ENCODE measurements at regions of chr12 and their contacts with region 1.

Region 1: DNA sequence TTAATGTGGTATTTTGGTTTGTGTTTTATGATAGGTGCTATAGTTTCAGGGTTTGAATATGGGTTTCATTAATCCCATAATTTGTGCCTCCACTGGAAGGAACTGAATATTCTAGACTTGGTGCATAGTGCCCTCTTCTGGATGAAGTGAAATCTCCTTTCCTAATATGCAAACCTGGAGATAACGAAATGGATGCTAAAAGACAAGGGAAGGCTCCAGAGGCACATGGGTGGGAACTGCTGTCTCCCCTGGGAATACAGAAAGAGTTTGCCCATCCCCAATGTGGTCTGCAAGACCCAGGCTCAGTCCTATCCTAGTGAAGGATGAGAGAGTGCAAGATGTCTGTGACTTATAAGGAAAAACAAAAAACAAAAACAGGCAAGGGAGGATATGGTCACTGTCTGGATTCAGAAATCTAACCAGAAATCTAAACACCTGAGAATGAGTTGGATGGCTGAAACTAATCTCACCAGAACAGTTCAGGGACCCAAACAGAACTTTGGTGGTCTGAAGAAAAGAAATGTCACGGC is 142.3 kb upstream of the TMPO start:
- DNase-seq: peak; percentile 61
- H3K4me3 ChIP-seq: no peak overlapping the region
- H3K27ac ChIP-seq: no peak overlapping the region
- H3K4me1 ChIP-seq: peaks cover 27% of the 10 kb centered on the region
- H3K27me3 ChIP-seq: peaks cover 7 to 9% of the 10 kb centered on the region in 2 experiments
- CTCF ChIP-seq: peak; percentile 46 to 47
- POLR2A ChIP-seq: no peak

Region 2: DNA sequence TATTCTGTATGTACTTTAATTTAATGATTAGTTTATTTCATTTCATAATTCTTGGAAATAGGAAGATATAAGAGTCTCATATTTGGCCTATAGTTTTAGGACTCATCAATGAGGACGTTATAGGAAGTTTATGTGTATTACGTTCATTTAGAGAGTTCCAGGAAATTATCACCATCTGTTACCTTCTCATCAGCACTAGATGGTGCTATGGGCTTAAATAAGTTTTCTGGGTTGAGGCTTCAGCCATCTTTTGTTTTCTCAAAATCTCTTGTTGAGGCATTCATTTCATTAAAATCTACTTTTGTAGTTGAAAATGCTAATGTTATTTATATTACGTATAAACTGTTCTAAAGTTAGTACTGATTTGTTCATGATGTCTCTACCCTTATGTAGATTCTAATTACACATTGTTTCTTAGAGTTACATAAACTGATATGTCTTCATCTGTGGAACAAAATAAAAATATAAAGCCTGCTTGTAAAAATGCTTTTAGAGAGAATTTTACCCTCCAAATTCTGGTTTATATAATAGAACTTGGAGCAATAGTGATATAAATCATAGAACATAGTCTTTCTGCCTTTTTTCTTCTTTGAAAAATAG is 1794.5 kb before region 1 on chr12:
- CTCF ChIA-PET with region 1: no interaction called
- POLR2A ChIA-PET with region 1: no interaction called
- dilution Hi-C with region 1: no loop called
- intact Hi-C with region 1: loop called (anchors 10 kb)
- DNase-seq: peak; percentile 56
- H3K4me3 ChIP-seq: no peak overlapping the region
- H3K27ac ChIP-seq: no peak overlapping the region
- H3K4me1 ChIP-seq: no peaks in the 10 kb centered on the region
- H3K27me3 ChIP-seq: no peaks in the 10 kb centered on the region
- CTCF ChIP-seq: peak; percentile 30 to 39
- POLR2A ChIP-seq: no peak

Region 3: GRCh38 chr12:97308576-97309198 is 1064.4 kb before region 1 on chr12:
- CTCF ChIA-PET with region 1: no interaction called
- POLR2A ChIA-PET with region 1: no interaction called
- dilution Hi-C with region 1: no loop called
- intact Hi-C with region 1: loop called (anchors 10 kb)
- DNase-seq: peak; percentile 77
- H3K4me3 ChIP-seq: no peak overlapping the region
- H3K27ac ChIP-seq: no peak overlapping the region
- H3K4me1 ChIP-seq: no peaks in the 10 kb centered on the region
- H3K27me3 ChIP-seq: peaks cover 0 to 1% of the 10 kb centered on the region in 2 experiments
- CTCF ChIP-seq: peak; percentile 37 to 50
- POLR2A ChIP-seq: no peak

Region 4: DNA sequence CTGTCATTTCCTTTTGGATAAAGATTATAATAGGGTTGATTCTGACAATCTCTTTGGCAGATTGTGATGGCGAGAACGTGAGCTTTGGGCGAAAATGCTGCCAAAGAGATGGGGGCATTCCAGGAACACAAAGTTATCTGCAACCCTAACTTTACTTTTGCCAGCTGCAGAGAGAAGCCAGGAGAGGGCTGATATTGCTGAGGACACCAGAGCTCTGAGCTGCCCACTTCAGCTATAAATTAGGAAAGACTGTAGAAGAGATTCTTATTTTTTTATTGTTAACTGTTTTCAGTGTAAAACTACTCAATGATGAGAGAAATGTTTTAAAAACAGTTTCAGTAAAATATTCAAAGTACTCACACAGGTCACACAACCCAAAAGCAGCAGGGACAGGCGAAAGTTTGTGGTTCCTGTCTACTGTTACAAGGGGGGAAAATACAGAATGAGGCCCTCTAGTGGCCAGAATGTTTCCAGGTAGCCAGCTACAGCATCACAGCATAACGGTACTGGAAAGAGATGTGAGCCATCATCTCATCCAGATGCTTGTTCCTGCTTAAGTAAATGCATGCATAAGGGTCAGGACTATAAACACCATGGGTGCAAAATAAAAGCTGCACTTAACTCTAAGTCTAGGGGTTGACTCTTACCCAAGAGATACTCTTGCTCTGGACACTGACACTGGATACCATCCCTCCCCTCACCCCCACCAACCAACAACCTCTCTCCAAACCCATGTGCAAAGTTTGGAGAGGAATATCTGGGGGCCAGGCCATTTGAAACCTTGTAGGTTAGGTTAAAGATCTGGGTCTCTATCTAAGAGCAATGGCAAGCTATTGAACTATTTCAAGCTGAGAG is 412.1 kb before region 1 on chr12:
- CTCF ChIA-PET with region 1: interaction called, 4 read pairs
- POLR2A ChIA-PET with region 1: no interaction called
- dilution Hi-C with region 1: no loop called
- intact Hi-C with region 1: loop called (anchors 2 kb)
- DNase-seq: peak; percentile 20
- H3K4me3 ChIP-seq: no peak overlapping the region
- H3K27ac ChIP-seq: no peak overlapping the region
- H3K4me1 ChIP-seq: no peaks in the 10 kb centered on the region
- H3K27me3 ChIP-seq: no peaks in the 10 kb centered on the region
- CTCF ChIP-seq: peak; percentile 63 to 73
- POLR2A ChIP-seq: no peak

Region 5: GRCh38 chr12:98154850-98155249 is 218.2 kb before region 1 on chr12:
- CTCF ChIA-PET with region 1: interaction called, 3 read pairs
- POLR2A ChIA-PET with region 1: no interaction called
- dilution Hi-C with region 1: no loop called
- intact Hi-C with region 1: loop called (anchors 1 kb)
- DNase-seq: peak; percentile 57
- H3K4me3 ChIP-seq: no peak overlapping the region
- H3K27ac ChIP-seq: no peak overlapping the region
- H3K4me1 ChIP-seq: no peaks in the 10 kb centered on the region
- H3K27me3 ChIP-seq: peaks cover 0 to 7% of the 10 kb centered on the region in 2 experiments
- CTCF ChIP-seq: peak; percentile 34 to 65
- POLR2A ChIP-seq: no peak

Region 6: GRCh38 chr12:98211909-98212695 is 161.0 kb before region 1 on chr12:
- CTCF ChIA-PET with region 1: no interaction called
- POLR2A ChIA-PET with region 1: no interaction called
- dilution Hi-C with region 1: no loop called
- intact Hi-C with region 1: no loop called
- DNase-seq: peak; percentile 35
- H3K4me3 ChIP-seq: no peak overlapping the region
- H3K27ac ChIP-seq: no peak overlapping the region
- H3K4me1 ChIP-seq: no peaks in the 10 kb centered on the region
- H3K27me3 ChIP-seq: no peaks in the 10 kb centered on the region
- CTCF ChIP-seq: no peak
- POLR2A ChIP-seq: no peak

Region 7: GRCh38 chr12:98262902-98263301 is 110.2 kb before region 1 on chr12:
- CTCF ChIA-PET with region 1: no interaction called
- POLR2A ChIA-PET with region 1: no interaction called
- dilution Hi-C with region 1: no loop called
- intact Hi-C with region 1: no loop called
- DNase-seq: no peak
- H3K4me3 ChIP-seq: no peak overlapping the region
- H3K27ac ChIP-seq: no peak overlapping the region
- H3K4me1 ChIP-seq: no peaks in the 10 kb centered on the region
- H3K27me3 ChIP-seq: no peaks in the 10 kb centered on the region
- CTCF ChIP-seq: no peak
- POLR2A ChIP-seq: no peak

Region 8: GRCh38 chr12:98385636-98386035 is 12.5 kb after region 1 on chr12:
- CTCF ChIA-PET with region 1: interaction called, 12 read pairs
- POLR2A ChIA-PET with region 1: no interaction called
- dilution Hi-C with region 1: no loop called
- intact Hi-C with region 1: no loop called
- DNase-seq: no peak
- H3K4me3 ChIP-seq: no peak overlapping the region
- H3K27ac ChIP-seq: no peak overlapping the region
- H3K4me1 ChIP-seq: no peaks in the 10 kb centered on the region
- H3K27me3 ChIP-seq: peaks cover 0 to 1% of the 10 kb centered on the region in 2 experiments
- CTCF ChIP-seq: no peak
- POLR2A ChIP-seq: no peak